ENCODE measurements at regions of chr12 and their contacts with region 1.

Region 1: GRCh38 chr12:24404086-24404815 is 454.8 kb upstream of the SOX5 start:
- DNase-seq: no peak
- H3K4me3 ChIP-seq: no peak overlapping the region
- H3K27ac ChIP-seq: no peak overlapping the region
- H3K4me1 ChIP-seq: peaks cover 0 to 6% (median 1%) of the 10 kb centered on the region in 4 experiments; a peak in 2 of 7 replicates
- H3K27me3 ChIP-seq: no peaks in the 10 kb centered on the region
- CTCF ChIP-seq: no peak
- EP300 ChIP-seq: no peak
- POLR2A ChIP-seq: no peak
- RAD21 ChIP-seq: no peak

Region 2: GRCh38 chr12:24360907-24361306 is 43.3 kb before region 1 on chr12:
- CTCF ChIA-PET with region 1: interaction called, 10 read pairs
- POLR2A ChIA-PET with region 1: no interaction called
- DNase-seq: no peak
- H3K4me3 ChIP-seq: no peak overlapping the region
- H3K27ac ChIP-seq: no peak overlapping the region
- H3K4me1 ChIP-seq: peaks cover 0 to 2% (median 1%) of the 10 kb centered on the region in 4 experiments; a peak in 2 of 7 replicates
- H3K27me3 ChIP-seq: no peaks in the 10 kb centered on the region
- CTCF ChIP-seq: no peak
- EP300 ChIP-seq: no peak
- POLR2A ChIP-seq: no peak
- RAD21 ChIP-seq: no peak

Region 3: GRCh38 chr12:24386836-24387235 is 17.4 kb before region 1 on chr12:
- CTCF ChIA-PET with region 1: no interaction called
- POLR2A ChIA-PET with region 1: no interaction called
- DNase-seq: no peak
- H3K4me3 ChIP-seq: no peak overlapping the region
- H3K27ac ChIP-seq: no peak overlapping the region
- H3K4me1 ChIP-seq: no peaks in the 10 kb centered on the region
- H3K27me3 ChIP-seq: no peaks in the 10 kb centered on the region
- CTCF ChIP-seq: no peak
- EP300 ChIP-seq: no peak
- POLR2A ChIP-seq: no peak
- RAD21 ChIP-seq: no peak

Region 4: DNA sequence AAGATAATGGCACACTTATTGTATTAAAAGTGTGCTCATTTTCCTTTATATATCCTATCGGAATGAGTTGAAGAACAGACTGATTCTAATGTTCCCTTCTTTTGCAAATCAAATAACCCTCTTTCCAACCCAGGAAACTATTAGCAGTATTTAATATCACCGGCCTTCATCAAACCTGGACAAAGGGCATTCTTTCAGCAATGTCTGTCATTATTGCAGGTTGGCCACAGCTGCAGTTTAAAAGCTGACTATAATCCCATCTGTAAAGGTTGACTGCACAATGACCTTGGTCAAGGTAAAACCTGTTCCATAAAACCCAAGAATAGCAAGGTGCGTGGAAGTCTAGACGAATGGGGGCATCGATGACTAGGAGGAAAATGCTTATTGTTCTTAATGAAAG is 17.5 kb after region 1 on chr12:
- CTCF ChIA-PET with region 1: no interaction called
- POLR2A ChIA-PET with region 1: no interaction called
- DNase-seq: no peak
- H3K4me3 ChIP-seq: no peak overlapping the region
- H3K27ac ChIP-seq: no peak overlapping the region
- H3K4me1 ChIP-seq: no peaks in the 10 kb centered on the region
- H3K27me3 ChIP-seq: no peaks in the 10 kb centered on the region
- CTCF ChIP-seq: no peak
- EP300 ChIP-seq: no peak
- POLR2A ChIP-seq: no peak
- RAD21 ChIP-seq: no peak

Region 5: DNA sequence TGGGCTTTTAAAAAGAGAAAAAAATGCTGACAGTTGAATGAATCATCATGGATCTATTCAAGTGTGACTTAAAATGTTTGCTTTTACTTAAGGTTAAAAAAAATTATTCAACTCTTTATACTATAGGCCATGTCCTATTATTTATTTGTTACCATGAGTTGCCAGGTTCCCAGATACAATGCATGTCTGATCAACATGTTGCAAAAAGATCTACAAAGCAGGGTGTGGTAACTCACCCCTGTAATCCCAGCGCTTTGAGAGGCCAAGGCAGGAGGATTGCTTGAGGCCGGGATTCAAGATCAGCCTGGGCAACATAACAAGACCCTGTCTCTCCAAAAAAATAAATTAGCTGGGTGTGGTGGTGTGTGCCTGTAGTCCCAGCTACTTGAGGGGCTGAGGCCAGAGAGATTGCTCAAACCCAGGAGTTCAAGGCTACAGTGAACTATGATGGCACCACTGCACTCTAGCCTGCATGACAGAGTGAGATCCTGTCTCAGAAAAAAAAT is 83.9 kb after region 1 on chr12:
- CTCF ChIA-PET with region 1: no interaction called
- POLR2A ChIA-PET with region 1: no interaction called
- DNase-seq: no peak
- H3K4me3 ChIP-seq: no peak overlapping the region
- H3K27ac ChIP-seq: no peak overlapping the region
- H3K4me1 ChIP-seq: no peaks in the 10 kb centered on the region
- H3K27me3 ChIP-seq: no peaks in the 10 kb centered on the region
- CTCF ChIP-seq: no peak
- EP300 ChIP-seq: no peak
- POLR2A ChIP-seq: no peak
- RAD21 ChIP-seq: no peak

Measured in H1 (cell line).